Endothelial cell of umbilical vein (primary cell): ENCODE measurements at regions of chr9 and their contacts with region 1.

Region 1: GRCh38 chr9:83266666-83267496 is 203.9 kb upstream of the RASEF start:
- DNase-seq: peak; percentile 67
- H3K4me3 ChIP-seq: peak overlapping the region in 1 of 3 experiments; percentile 60
- H3K27ac ChIP-seq: peak overlapping the region; percentile 79
- H3K4me1 ChIP-seq: peaks cover 72% of the 10 kb centered on the region
- H3K27me3 ChIP-seq: no peaks in the 10 kb centered on the region
- CTCF ChIP-seq: no peak
- POLR2A ChIP-seq: peak; percentile 61

Region 2: GRCh38 chr9:81874931-81875330 is 1392.0 kb before region 1 on chr9:
- CTCF ChIA-PET with region 1: no interaction called
- POLR2A ChIA-PET with region 1: no interaction called
- dilution Hi-C with region 1: no loop called
- intact Hi-C with region 1: loop called (anchors 10 kb)
- DNase-seq: peak; percentile 97
- H3K4me3 ChIP-seq: no peak overlapping the region
- H3K27ac ChIP-seq: peak overlapping the region; percentile 95
- H3K4me1 ChIP-seq: peaks cover 38% of the 10 kb centered on the region
- H3K27me3 ChIP-seq: no peaks in the 10 kb centered on the region
- CTCF ChIP-seq: no peak
- POLR2A ChIP-seq: no peak

Region 3: DNA sequence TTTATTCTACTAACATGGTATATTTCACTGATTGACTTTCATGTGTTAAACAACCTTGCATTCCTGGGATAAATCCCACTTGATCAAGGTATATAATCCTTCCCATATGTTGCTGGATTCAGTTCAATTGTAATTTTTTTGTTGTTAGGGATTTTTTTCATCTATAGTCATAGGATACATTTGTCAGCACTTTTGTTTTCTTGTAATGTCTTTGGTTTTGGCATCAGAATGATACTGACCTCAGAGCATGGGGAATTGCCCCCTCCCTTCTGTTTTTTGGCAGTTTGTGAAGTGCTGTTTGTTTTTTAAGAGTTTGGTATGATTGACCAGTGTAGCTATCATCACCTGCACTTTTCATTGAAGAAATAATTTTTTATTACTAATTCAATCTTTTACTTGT is 27.1 kb before region 1 on chr9:
- CTCF ChIA-PET with region 1: interaction called, 3 read pairs
- POLR2A ChIA-PET with region 1: no interaction called
- dilution Hi-C with region 1: no loop called
- intact Hi-C with region 1: loop called (anchors 2 kb)
- DNase-seq: peak; percentile 18
- H3K4me3 ChIP-seq: no peak overlapping the region
- H3K27ac ChIP-seq: no peak overlapping the region
- H3K4me1 ChIP-seq: peaks cover 18% of the 10 kb centered on the region
- H3K27me3 ChIP-seq: no peaks in the 10 kb centered on the region
- CTCF ChIP-seq: no peak
- POLR2A ChIP-seq: no peak

Region 4: GRCh38 chr9:83281306-83282255 is 14.7 kb after region 1 on chr9:
- CTCF ChIA-PET with region 1: interaction called, 15 read pairs
- POLR2A ChIA-PET with region 1: no interaction called
- dilution Hi-C with region 1: no loop called
- intact Hi-C with region 1: loop called (anchors 1 kb)
- DNase-seq: peak; percentile 82
- H3K4me3 ChIP-seq: peak overlapping the region in 1 of 3 experiments; percentile 14
- H3K27ac ChIP-seq: peak overlapping the region; percentile 77
- H3K4me1 ChIP-seq: peaks cover 25% of the 10 kb centered on the region
- H3K27me3 ChIP-seq: no peaks in the 10 kb centered on the region
- CTCF ChIP-seq: no peak
- POLR2A ChIP-seq: no peak

Region 5: GRCh38 chr9:83304686-83305085 is 37.8 kb after region 1 on chr9:
- CTCF ChIA-PET with region 1: no interaction called
- POLR2A ChIA-PET with region 1: no interaction called
- dilution Hi-C with region 1: no loop called
- intact Hi-C with region 1: loop called (anchors 2 kb)
- DNase-seq: peak; percentile 38
- H3K4me3 ChIP-seq: no peak overlapping the region
- H3K27ac ChIP-seq: no peak overlapping the region
- H3K4me1 ChIP-seq: peaks cover 4% of the 10 kb centered on the region
- H3K27me3 ChIP-seq: no peaks in the 10 kb centered on the region
- CTCF ChIP-seq: no peak
- POLR2A ChIP-seq: no peak

Region 6: GRCh38 chr9:83538172-83538889 is 271.4 kb after region 1 on chr9 and contains the start of gene FRMD3:
- CTCF ChIA-PET with region 1: no interaction called
- POLR2A ChIA-PET with region 1: no interaction called
- dilution Hi-C with region 1: no loop called
- intact Hi-C with region 1: loop called (anchors 5 kb)
- DNase-seq: peak; percentile 66
- H3K4me3 ChIP-seq: peak within 1 kb of the TSS; percentile 29 to 40 (median 36)
- H3K27ac ChIP-seq: no peak within 1 kb of the TSS
- H3K4me1 ChIP-seq: peaks cover 6% of the 10 kb centered on the region
- H3K27me3 ChIP-seq: peaks cover 8 to 19% of the 10 kb centered on the region in 2 experiments
- CTCF ChIP-seq: peak; percentile 61 to 79
- POLR2A ChIP-seq: no peak
- total RNA-seq, gene FRMD3: 6.1 and 7.3 TPM in 2 replicates

Region 7: GRCh38 chr9:83707768-83708514 is 441.1 kb after region 1 on chr9 and contains the start of gene UBQLN1:
- CTCF ChIA-PET with region 1: no interaction called
- POLR2A ChIA-PET with region 1: no interaction called
- dilution Hi-C with region 1: no loop called
- intact Hi-C with region 1: loop called (anchors 1 kb)
- DNase-seq: peak; percentile 93
- H3K4me3 ChIP-seq: peak within 1 kb of the TSS; percentile 18 to 100 (median 57)
- H3K27ac ChIP-seq: peak within 1 kb of the TSS; percentile 99
- H3K4me1 ChIP-seq: peaks cover 16% of the 10 kb centered on the region
- H3K27me3 ChIP-seq: no peaks in the 10 kb centered on the region
- CTCF ChIP-seq: no peak
- POLR2A ChIP-seq: peak; percentile 93
- total RNA-seq, gene UBQLN1: 101 and 110 TPM in 2 replicates

Region 8: GRCh38 chr9:84002344-84002743 is 735.5 kb after region 1 on chr9:
- CTCF ChIA-PET with region 1: no interaction called
- POLR2A ChIA-PET with region 1: no interaction called
- dilution Hi-C with region 1: no loop called
- intact Hi-C with region 1: no loop called
- DNase-seq: peak; percentile 35
- H3K4me3 ChIP-seq: no peak overlapping the region
- H3K27ac ChIP-seq: no peak overlapping the region
- H3K4me1 ChIP-seq: no peaks in the 10 kb centered on the region
- H3K27me3 ChIP-seq: no peaks in the 10 kb centered on the region
- CTCF ChIP-seq: no peak
- POLR2A ChIP-seq: no peak